ENCODE measurements at regions of chr2 and their contacts with region 1.

Region 1: GRCh38 chr2:230798769-230799399 is 65.9 kb upstream of the ITM2C start:
- DNase-seq: peak in 7 of 9 donors; percentile 44 to 76 (median 69)
- ATAC-seq: peak; percentile 58
- H3K4me3 ChIP-seq: no peak overlapping the region
- H3K4me3 Mint-ChIP-seq: peak overlapping the region in 3 of 10 donors; percentile 8 to 33 (median 15)
- H3K27ac ChIP-seq: no peak overlapping the region
- H3K27ac Mint-ChIP-seq: peak overlapping the region in 4 of 9 donors; percentile 59 to 76 (median 69)
- H3K4me1 ChIP-seq: peaks cover 30 to 41% of the 10 kb centered on the region in 2 donors
- H3K4me1 Mint-ChIP-seq: peaks cover 6 to 34% (median 26%) of the 10 kb centered on the region in 7 donors
- H3K27me3 ChIP-seq: no peaks in the 10 kb centered on the region
- H3K27me3 Mint-ChIP-seq: no peaks in the 10 kb centered on the region

Region 2: GRCh38 chr2:230007931-230008707 is 790.8 kb before region 1 on chr2:
- CTCF ChIA-PET with region 1: interaction called, 4 read pairs
- POLR2A ChIA-PET with region 1: no interaction called
- intact Hi-C with region 1: loop called (anchors 1 kb)
- DNase-seq: peak; percentile 53 to 83 (median 72)
- ATAC-seq: peak; percentile 80
- H3K4me3 ChIP-seq: no peak overlapping the region
- H3K4me3 Mint-ChIP-seq: peak overlapping the region in 9 of 10 donors; percentile 25 to 71 (median 62)
- H3K27ac ChIP-seq: no peak overlapping the region
- H3K27ac Mint-ChIP-seq: peak overlapping the region in 1 of 9 donors; percentile 0
- H3K4me1 ChIP-seq: no peaks in the 10 kb centered on the region
- H3K4me1 Mint-ChIP-seq: peaks cover 5 to 11% (median 7%) of the 10 kb centered on the region in 7 donors
- H3K27me3 ChIP-seq: no peaks in the 10 kb centered on the region
- H3K27me3 Mint-ChIP-seq: no peaks in the 10 kb centered on the region

Region 3: DNA sequence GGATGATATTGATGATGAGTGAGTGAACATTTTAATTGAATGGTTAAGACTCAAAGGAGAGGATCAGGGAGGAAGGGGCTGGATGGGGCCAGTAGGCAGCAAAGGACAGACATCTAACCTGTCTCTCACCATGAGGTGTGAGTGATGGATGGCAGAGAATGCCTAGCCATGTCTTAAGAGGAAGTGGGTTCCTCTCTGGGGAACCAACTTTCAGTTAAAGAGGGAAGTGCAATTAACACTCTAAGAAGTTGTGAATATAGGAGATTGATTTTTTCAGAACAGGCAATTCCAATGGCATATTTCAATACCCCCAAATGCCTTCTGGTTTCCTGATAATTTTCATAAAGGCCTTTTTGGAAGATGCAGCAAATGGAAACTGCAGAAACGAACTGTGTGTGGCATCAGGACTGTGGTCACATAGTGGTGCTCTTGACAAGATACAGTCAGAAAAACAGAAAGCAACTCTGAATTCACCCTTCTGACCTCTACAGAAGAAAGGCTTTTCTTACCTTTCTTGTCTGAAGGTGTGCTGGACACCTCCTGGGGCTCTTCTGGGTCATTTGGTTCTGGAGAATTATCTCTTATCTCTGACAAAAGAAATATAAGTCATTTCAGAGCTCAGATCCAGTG is 589.3 kb before region 1 on chr2:
- CTCF ChIA-PET with region 1: no interaction called
- POLR2A ChIA-PET with region 1: no interaction called
- intact Hi-C with region 1: no loop called
- DNase-seq: no peak
- ATAC-seq: peak; percentile 68
- H3K4me3 ChIP-seq: no peak overlapping the region
- H3K4me3 Mint-ChIP-seq: no peak overlapping the region
- H3K27ac ChIP-seq: peak overlapping the region; percentile 44
- H3K27ac Mint-ChIP-seq: no peak overlapping the region
- H3K4me1 ChIP-seq: peaks cover 9 to 10% of the 10 kb centered on the region in 2 donors
- H3K4me1 Mint-ChIP-seq: peaks cover 7 to 45% (median 26%) of the 10 kb centered on the region in 7 donors
- H3K27me3 ChIP-seq: no peaks in the 10 kb centered on the region
- H3K27me3 Mint-ChIP-seq: no peaks in the 10 kb centered on the region

Region 4: GRCh38 chr2:230472621-230473018 is 326.3 kb before region 1 on chr2:
- CTCF ChIA-PET with region 1: interaction called, 4 read pairs
- POLR2A ChIA-PET with region 1: no interaction called
- intact Hi-C with region 1: loop called in 1 of 2 experiments (anchors 10 kb)
- DNase-seq: peak in 1 of 9 donors; percentile 39
- ATAC-seq: peak; percentile 74
- H3K4me3 ChIP-seq: no peak overlapping the region
- H3K4me3 Mint-ChIP-seq: peak overlapping the region in 8 of 10 donors; percentile 12 to 62 (median 30)
- H3K27ac ChIP-seq: peak overlapping the region; percentile 48
- H3K27ac Mint-ChIP-seq: peak overlapping the region; percentile 45 to 92 (median 83)
- H3K4me1 ChIP-seq: peaks cover 10 to 24% of the 10 kb centered on the region in 2 donors
- H3K4me1 Mint-ChIP-seq: peaks cover 22 to 60% (median 52%) of the 10 kb centered on the region in 7 donors
- H3K27me3 ChIP-seq: no peaks in the 10 kb centered on the region
- H3K27me3 Mint-ChIP-seq: no peaks in the 10 kb centered on the region

Region 5: DNA sequence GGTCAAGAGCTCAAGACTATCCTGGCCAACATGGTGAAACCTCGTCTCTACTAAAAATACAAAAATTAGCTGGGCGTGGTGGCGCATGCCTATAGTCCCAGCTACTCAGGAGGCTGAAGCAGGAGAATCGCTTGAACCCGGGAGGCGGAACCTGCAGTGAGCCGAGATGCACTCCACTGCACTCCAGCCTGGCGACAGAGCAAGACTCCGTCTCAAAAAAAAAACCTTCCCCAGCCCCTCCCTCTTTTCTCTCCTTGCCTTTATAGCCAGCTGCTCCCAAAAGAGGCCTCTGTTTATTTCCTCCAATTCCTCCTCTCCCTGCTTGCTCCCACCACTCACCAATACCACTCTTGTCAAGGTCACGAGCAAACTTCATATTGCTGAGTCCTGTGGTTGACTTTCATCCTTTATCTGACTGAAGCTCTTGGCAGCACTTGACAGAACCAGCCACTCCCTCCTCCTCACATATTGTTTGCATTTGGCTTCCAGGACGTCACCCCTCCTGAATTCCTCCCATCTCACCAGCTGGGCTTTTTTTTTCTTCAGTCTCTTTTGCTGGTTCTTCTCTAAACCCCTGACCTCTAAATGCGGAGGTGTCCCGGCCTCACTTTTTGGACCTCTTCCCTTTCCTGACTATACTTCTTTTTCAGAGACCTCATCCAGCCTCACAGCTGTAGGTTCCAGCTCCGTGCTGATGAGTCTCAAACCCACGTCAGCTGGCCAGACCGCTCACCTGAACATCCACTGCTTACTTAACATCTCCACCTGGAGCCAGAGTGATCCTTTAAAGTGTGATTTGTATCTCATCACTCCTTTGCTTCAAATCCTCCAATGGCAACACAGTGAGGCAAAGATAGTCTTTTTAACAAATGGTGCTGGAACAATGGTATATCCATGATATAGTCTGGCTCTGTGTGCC is 170.8 kb before region 1 on chr2:
- CTCF ChIA-PET with region 1: no interaction called
- POLR2A ChIA-PET with region 1: no interaction called
- intact Hi-C with region 1: no loop called
- DNase-seq: peak in 4 of 9 donors; percentile 8 to 29 (median 19)
- ATAC-seq: peak; percentile 63
- H3K4me3 ChIP-seq: no peak overlapping the region
- H3K4me3 Mint-ChIP-seq: peak overlapping the region in 5 of 10 donors; percentile 4 to 65 (median 36)
- H3K27ac ChIP-seq: no peak overlapping the region
- H3K27ac Mint-ChIP-seq: peak overlapping the region in 6 of 9 donors; percentile 8 to 91 (median 28)
- H3K4me1 ChIP-seq: peaks cover 0 to 8% of the 10 kb centered on the region in 2 donors
- H3K4me1 Mint-ChIP-seq: peaks cover 14 to 25% (median 21%) of the 10 kb centered on the region in 7 donors
- H3K27me3 ChIP-seq: no peaks in the 10 kb centered on the region
- H3K27me3 Mint-ChIP-seq: no peaks in the 10 kb centered on the region

Region 6: GRCh38 chr2:230721712-230722111 is 77.2 kb before region 1 on chr2:
- CTCF ChIA-PET with region 1: interaction called, 9 read pairs
- POLR2A ChIA-PET with region 1: interaction called, 8 read pairs
- intact Hi-C with region 1: loop called in 1 of 2 experiments (anchors 2 kb)
- DNase-seq: peak in 4 of 9 donors; percentile 8 to 25 (median 22)
- ATAC-seq: no peak
- H3K4me3 ChIP-seq: no peak overlapping the region
- H3K4me3 Mint-ChIP-seq: peak overlapping the region; percentile 38 to 85 (median 64)
- H3K27ac ChIP-seq: peak overlapping the region; percentile 55
- H3K27ac Mint-ChIP-seq: peak overlapping the region; percentile 4 to 94 (median 80)
- H3K4me1 ChIP-seq: peaks cover 76 to 80% of the 10 kb centered on the region in 2 donors
- H3K4me1 Mint-ChIP-seq: peaks cover 61 to 97% (median 87%) of the 10 kb centered on the region in 7 donors
- H3K27me3 ChIP-seq: no peaks in the 10 kb centered on the region
- H3K27me3 Mint-ChIP-seq: no peaks in the 10 kb centered on the region

Region 7: GRCh38 chr2:230762317-230762896 is 36.5 kb before region 1 on chr2:
- CTCF ChIA-PET with region 1: interaction called, 4 read pairs
- POLR2A ChIA-PET with region 1: interaction called, 3 read pairs
- intact Hi-C with region 1: loop called (anchors 2 to 5 kb)
- DNase-seq: peak in 6 of 9 donors; percentile 13 to 32 (median 22)
- ATAC-seq: peak; percentile 80
- H3K4me3 ChIP-seq: no peak overlapping the region
- H3K4me3 Mint-ChIP-seq: no peak overlapping the region
- H3K27ac ChIP-seq: no peak overlapping the region
- H3K27ac Mint-ChIP-seq: peak overlapping the region in 5 of 9 donors; percentile 0 to 54 (median 23)
- H3K4me1 ChIP-seq: peaks cover 19 to 26% of the 10 kb centered on the region in 2 donors
- H3K4me1 Mint-ChIP-seq: peaks cover 44 to 73% (median 63%) of the 10 kb centered on the region in 7 donors
- H3K27me3 ChIP-seq: no peaks in the 10 kb centered on the region
- H3K27me3 Mint-ChIP-seq: no peaks in the 10 kb centered on the region

Region 8: GRCh38 chr2:231052494-231053451 is 253.9 kb after region 1 on chr2:
- CTCF ChIA-PET with region 1: no interaction called
- POLR2A ChIA-PET with region 1: no interaction called
- intact Hi-C with region 1: no loop called
- DNase-seq: peak; percentile 63 to 87 (median 79)
- ATAC-seq: peak; percentile 73
- H3K4me3 ChIP-seq: peak overlapping the region; percentile 88
- H3K4me3 Mint-ChIP-seq: peak overlapping the region; percentile 84 to 93 (median 92)
- H3K27ac ChIP-seq: peak overlapping the region; percentile 5
- H3K27ac Mint-ChIP-seq: peak overlapping the region in 7 of 9 donors; percentile 54 to 80 (median 62)
- H3K4me1 ChIP-seq: peaks cover 7 to 9% of the 10 kb centered on the region in 2 donors
- H3K4me1 Mint-ChIP-seq: peaks cover 7 to 33% (median 24%) of the 10 kb centered on the region in 7 donors
- H3K27me3 ChIP-seq: no peaks in the 10 kb centered on the region
- H3K27me3 Mint-ChIP-seq: peaks cover 0 to 16% (median 11%) of the 10 kb centered on the region in 5 donors

Region 9: GRCh38 chr2:232058063-232058877 is 1259.4 kb after region 1 on chr2:
- CTCF ChIA-PET with region 1: no interaction called
- POLR2A ChIA-PET with region 1: no interaction called
- intact Hi-C with region 1: no loop called
- DNase-seq: no peak
- ATAC-seq: no peak
- H3K4me3 ChIP-seq: no peak overlapping the region
- H3K4me3 Mint-ChIP-seq: no peak overlapping the region
- H3K27ac ChIP-seq: no peak overlapping the region
- H3K27ac Mint-ChIP-seq: peak overlapping the region in 1 of 9 donors; percentile 22
- H3K4me1 ChIP-seq: peaks cover 0 to 4% of the 10 kb centered on the region in 2 donors
- H3K4me1 Mint-ChIP-seq: peaks cover 8 to 45% (median 37%) of the 10 kb centered on the region in 7 donors
- H3K27me3 ChIP-seq: no peaks in the 10 kb centered on the region
- H3K27me3 Mint-ChIP-seq: peaks cover 0 to 5% (median 0%) of the 10 kb centered on the region in 5 donors